GM10248 (cell line): ENCODE measurements at regions of chr1 and their contacts with region 1.

Region 1: DNA sequence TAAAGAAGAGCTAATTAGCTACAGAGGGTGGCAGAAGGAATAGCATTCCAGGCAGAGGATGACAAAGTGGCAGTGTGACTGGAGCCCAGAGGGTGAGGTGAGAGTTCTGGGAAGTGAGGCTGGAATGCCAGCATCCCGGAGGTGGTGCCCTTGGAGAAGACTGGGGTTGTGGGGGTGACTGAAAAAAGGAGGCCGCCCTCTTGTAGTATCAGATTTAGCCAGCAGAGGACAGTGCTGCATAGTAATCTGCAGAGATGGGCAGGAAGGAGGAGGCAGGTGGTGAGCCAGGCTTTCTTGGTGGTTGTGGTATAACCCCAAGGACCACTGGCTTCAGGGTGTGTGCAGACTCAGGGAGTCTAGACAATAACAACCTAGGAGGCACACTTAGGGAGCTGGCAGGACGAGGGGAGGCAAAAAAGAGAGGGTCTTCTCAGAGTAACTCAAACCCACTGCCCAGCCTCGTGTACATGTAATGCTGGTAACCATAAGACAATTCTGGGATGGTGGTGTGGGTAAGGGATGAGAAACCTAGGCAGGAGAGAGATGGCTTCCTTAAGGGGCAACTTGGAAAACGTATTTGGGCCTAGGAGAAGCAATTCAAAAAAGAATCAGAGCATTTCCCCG is 30.5 kb downstream of the MROH7 start:
- DNase-seq: peak; percentile 78
- CTCF ChIP-seq: peak; percentile 83

Region 2: DNA sequence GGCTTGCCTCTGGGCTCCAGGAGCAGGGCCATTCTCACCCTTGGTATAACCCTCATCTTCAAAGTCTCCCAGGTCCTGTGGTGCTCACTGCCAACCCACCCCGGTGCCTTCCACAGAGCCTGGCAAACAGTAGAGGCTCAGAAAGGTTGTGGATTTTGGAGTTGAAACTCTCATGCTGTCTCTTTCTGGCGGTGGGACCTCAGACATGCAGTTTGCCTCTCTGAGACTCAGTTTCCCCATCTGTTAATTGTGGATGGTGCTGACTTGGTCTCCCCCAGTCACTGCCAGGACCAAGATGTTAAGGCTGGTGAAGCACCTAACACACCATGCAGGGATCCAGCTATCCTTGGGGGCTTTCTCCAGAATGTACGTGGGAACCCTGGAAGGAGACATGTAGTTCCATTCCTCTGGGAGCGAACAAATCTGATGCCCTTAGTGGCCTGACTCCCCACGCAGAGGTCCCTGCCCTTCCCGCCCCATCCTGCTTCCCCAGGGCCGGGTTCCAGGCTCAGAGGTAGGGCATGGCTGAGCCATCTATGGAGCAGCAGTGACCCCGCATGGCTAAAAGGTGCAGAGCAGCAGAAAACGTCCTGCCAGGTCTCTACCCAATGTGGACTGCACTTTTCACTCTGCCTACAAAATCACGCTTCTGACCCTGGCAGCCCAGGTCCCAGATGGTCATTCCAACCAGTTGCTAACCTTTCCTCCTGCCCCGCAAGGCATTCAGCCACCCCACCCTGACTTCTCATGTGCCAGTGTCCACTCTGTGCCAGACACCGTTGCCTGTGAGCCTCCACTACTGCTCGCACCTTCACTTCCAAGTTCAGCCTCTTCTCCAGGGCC is 138.2 kb after region 1 on chr1:
- CTCF ChIA-PET with region 1: interaction called, 14 read pairs
- POLR2A ChIA-PET with region 1: no interaction called
- DNase-seq: peak; percentile 84
- CTCF ChIP-seq: peak; percentile 91